Mammary epithelial cell (primary cell): ENCODE measurements at regions of chr11 and their contacts with region 1.

Region 1: DNA sequence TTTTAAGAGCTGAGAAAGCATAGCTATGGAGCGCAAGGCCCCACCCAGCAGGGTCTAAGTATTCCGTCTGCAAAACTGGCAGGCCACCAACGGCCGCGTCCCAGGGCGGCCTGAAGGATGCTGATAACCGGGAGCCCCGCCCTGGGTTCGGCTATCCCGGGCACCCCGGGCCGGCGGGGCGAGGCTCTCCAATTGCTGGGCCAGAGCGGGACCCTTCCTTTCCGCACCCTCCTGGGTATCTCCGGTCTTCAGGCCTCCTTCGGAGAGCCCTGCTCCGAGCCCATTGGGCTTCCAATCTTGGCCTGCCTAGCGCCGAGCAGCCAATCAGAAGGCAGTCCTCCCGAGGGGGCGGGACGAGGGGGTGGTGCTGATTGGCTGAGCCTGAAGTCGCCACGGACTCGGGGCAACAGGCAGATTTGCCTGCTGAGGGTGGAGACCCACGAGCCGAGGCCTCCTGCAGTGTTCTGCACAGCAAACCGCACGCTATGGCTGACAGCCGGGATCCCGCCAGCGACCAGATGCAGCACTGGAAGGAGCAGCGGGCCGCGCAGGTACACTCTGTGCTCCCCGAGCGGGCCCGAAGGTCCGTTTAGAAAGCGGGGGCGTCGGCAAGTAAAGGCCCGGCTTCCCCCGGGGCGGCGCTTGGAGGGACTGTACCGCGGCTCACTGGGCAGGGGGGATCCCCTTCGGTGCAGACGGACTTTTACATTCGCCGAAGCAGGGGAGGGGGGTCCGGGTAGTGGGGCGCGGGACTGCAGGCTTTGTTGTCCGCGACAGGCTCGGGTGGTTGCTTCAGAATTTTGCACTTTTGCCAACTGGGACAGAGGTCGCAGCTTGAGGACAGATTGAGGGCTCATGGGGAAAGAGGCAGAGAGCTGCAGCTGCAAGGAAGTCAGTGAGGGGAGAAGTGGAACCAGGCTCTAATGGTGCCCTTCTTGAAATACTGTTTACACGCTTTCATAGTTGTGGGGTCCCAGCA is at the start of gene CAT:
- DNase-seq: peak; percentile 97
- H3K4me3 ChIP-seq: peak within 1 kb of the TSS; percentile 84 to 90 (median 88)
- H3K27ac ChIP-seq: peak within 1 kb of the TSS; percentile 60
- H3K4me1 ChIP-seq: peaks cover 9% of the 10 kb centered on the region
- H3K27me3 ChIP-seq: no peaks in the 10 kb centered on the region
- CTCF ChIP-seq: no peak
- total RNA-seq, gene CAT: 30.6 to 147 TPM

Region 2: DNA sequence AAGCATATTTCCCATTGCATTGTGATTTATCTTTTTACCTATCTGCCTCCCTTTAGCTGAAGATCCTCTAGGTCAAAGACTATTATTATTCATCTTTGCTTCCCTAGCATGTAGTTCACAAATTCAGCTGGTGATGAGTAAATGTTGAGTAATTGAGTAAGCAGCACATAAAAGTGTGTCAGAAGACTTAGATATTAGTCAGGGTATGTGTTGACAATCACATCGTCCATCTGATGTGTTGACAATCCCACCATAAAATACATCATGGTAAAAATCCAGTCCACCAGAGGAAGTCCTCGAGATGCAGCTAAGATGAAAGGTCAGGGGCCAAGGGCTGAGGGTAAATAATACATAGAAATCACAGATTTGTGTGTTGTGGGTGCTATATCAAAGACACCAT is 58.1 kb before region 1 on chr11:
- CTCF ChIA-PET with region 1: no interaction called
- dilution Hi-C with region 1: no loop called
- in situ Hi-C with region 1: no loop called
- intact Hi-C with region 1: loop called (anchors 5 kb)
- DNase-seq: peak; percentile 85
- H3K4me3 ChIP-seq: no peak overlapping the region
- H3K27ac ChIP-seq: no peak overlapping the region
- H3K4me1 ChIP-seq: peaks cover 25% of the 10 kb centered on the region
- H3K27me3 ChIP-seq: no peaks in the 10 kb centered on the region
- CTCF ChIP-seq: no peak

Region 3: DNA sequence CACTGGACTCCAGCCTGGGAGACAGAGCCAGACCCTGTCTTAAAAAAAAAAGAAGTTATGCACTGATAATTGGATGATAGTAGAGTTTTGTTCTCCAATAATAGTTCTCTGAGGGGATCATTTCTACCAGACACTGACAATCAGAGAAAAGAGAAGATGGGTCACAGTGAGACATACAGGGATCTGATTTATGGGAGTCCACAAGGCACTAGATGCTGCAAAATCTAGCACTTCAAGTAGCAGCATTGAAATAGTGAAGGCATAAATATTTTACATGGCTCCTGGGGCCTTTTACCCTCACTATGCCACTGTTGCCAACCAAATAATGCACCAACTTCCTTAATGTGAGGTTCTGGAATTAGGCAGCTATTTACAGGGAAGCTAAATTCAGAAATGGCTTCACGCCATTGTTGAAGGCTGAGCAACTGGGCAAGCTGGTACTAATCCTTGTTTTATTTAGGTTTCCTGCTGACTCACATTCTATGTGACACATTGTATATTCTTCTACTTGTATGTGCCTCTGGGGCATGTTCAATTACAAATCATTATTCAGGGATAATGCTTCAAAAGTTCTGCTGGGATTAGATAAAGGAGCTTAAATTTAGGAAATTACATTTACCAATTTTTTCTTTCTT is 42.8 kb before region 1 on chr11:
- CTCF ChIA-PET with region 1: no interaction called
- dilution Hi-C with region 1: no loop called
- in situ Hi-C with region 1: no loop called
- intact Hi-C with region 1: loop called (anchors 5 kb)
- DNase-seq: peak; percentile 89
- H3K4me3 ChIP-seq: no peak overlapping the region
- H3K27ac ChIP-seq: peak overlapping the region; percentile 50
- H3K4me1 ChIP-seq: peaks cover 29% of the 10 kb centered on the region
- H3K27me3 ChIP-seq: no peaks in the 10 kb centered on the region
- CTCF ChIP-seq: no peak

Region 4: GRCh38 chr11:34407121-34407786 is 31.6 kb before region 1 on chr11:
- CTCF ChIA-PET with region 1: no interaction called
- dilution Hi-C with region 1: no loop called
- in situ Hi-C with region 1: no loop called
- intact Hi-C with region 1: no loop called
- DNase-seq: peak; percentile 37
- H3K4me3 ChIP-seq: no peak overlapping the region
- H3K27ac ChIP-seq: no peak overlapping the region
- H3K4me1 ChIP-seq: peaks cover 4% of the 10 kb centered on the region
- H3K27me3 ChIP-seq: no peaks in the 10 kb centered on the region
- CTCF ChIP-seq: no peak

Region 5: GRCh38 chr11:34427186-34427805 is 11.5 kb before region 1 on chr11:
- CTCF ChIA-PET with region 1: no interaction called
- dilution Hi-C with region 1: no loop called
- in situ Hi-C with region 1: no loop called
- intact Hi-C with region 1: loop called (anchors 1 kb)
- DNase-seq: peak; percentile 92
- H3K4me3 ChIP-seq: no peak overlapping the region
- H3K27ac ChIP-seq: peak overlapping the region; percentile 41
- H3K4me1 ChIP-seq: peaks cover 28% of the 10 kb centered on the region
- H3K27me3 ChIP-seq: no peaks in the 10 kb centered on the region
- CTCF ChIP-seq: no peak

Region 6: DNA sequence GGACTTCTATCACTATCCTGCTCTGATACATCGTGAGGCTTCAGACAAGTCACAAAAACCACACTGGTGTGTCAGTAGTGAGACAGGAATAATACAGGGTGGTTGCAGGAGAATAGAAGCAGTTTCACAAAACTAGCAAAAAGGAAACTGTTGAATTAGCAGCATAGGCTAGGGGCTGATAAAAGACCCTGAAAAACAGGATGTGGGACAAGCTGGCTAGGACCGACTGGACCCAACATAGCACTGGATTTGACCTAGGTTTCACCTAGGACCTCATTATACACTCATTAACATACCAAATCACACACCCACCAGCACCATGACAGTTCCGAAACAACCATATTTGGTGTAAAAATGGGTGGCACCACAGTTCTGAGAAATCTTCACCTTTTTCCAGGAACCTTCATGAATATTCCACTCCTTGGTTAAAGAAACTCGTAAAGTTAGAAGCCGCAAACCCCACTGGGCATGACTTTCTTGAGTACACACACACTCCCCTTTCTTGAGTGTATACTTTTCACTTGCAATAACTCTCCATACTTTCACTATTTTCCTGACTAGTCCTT is 904.3 kb after region 1 on chr11:
- CTCF ChIA-PET with region 1: no interaction called
- dilution Hi-C with region 1: no loop called
- in situ Hi-C with region 1: no loop called
- intact Hi-C with region 1: no loop called
- DNase-seq: no peak
- H3K4me3 ChIP-seq: no peak overlapping the region
- H3K27ac ChIP-seq: no peak overlapping the region
- H3K4me1 ChIP-seq: peaks cover 15% of the 10 kb centered on the region
- H3K27me3 ChIP-seq: no peaks in the 10 kb centered on the region
- CTCF ChIP-seq: no peak